Activated naive CD4-positive, alpha-beta T cell treated with anti-CD3 and anti-CD28 coated beads, Interleukin-2, amount 10 ng/mL, durations not matched to agents 7 days and 5 days (primary cell): ENCODE measurements at regions of chr1 and their contacts with region 1.

Region 1: GRCh38 chr1:88180449-88181108 is 503.5 kb upstream of the PKN2 start:
- DNase-seq: peak; percentile 73
- H3K4me3 Mint-ChIP-seq: no peak overlapping the region
- H3K27ac Mint-ChIP-seq: no peak overlapping the region
- H3K4me1 Mint-ChIP-seq: no peaks in the 10 kb centered on the region
- H3K27me3 Mint-ChIP-seq: no peaks in the 10 kb centered on the region

Region 2: DNA sequence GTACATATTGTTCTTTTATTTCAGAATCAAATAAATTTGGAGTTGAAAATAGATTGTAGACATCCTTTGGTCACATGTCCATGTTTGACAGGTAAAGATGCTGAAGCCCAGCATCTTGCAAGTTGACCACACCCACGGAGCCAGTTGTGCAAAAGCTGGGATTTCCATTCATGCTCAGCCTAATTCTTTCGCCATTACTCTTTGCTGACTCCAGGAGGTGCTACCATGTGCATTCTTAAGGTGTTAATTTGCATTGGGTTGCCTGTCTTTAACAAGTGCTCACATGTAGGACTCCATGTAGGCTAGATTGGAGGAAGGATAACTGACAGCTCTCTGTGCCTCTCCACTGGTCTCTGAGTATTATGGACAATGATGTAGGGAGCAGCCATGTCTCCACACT is 191.2 kb before region 1 on chr1:
- CTCF ChIA-PET with region 1: no interaction called
- DNase-seq: no peak
- H3K4me3 Mint-ChIP-seq: no peak overlapping the region
- H3K27ac Mint-ChIP-seq: no peak overlapping the region
- H3K4me1 Mint-ChIP-seq: no peaks in the 10 kb centered on the region
- H3K27me3 Mint-ChIP-seq: no peaks in the 10 kb centered on the region

Region 3: DNA sequence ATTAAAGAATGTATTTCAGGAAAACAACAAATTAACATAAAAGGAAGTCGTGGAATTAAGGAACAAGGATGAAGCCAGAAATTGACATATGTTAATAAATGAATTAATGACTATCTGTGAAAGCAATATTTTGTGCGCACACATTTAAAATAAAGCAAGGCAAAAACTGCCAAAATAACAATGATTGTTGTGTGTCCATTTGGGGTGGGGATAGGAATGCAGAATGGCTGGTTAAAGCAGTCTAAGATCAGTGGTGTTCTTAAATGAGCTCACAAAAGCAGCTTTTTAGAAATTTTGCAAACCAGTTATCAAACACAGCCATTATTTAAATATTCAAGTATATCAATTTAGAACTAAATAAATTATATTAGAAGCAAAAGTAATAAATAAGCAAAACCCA is 12.8 kb after region 1 on chr1:
- CTCF ChIA-PET with region 1: interaction called, 10 read pairs
- DNase-seq: no peak
- H3K4me3 Mint-ChIP-seq: no peak overlapping the region
- H3K27ac Mint-ChIP-seq: no peak overlapping the region
- H3K4me1 Mint-ChIP-seq: peaks cover 8% of the 10 kb centered on the region
- H3K27me3 Mint-ChIP-seq: peaks cover 4% of the 10 kb centered on the region

Region 4: DNA sequence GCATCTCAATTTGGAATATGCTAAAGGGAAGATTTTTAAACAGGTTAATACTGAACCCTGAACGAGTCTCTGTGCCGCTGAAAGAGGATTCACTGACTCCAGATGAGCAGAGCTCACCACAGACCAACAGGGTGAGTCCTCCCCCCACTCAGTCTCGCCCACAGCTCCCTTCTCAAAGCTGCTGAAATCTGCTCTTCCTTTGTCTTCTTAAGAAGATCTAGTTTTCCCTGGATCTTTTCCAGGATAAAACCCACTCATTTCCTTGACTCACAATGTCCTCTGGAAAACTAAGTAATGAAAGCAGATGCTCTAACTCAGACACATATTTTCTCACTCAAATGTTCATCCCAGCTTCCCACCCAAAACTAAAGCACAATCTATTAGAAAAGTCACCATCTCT is 56.5 kb after region 1 on chr1:
- CTCF ChIA-PET with region 1: no interaction called
- DNase-seq: no peak
- H3K4me3 Mint-ChIP-seq: no peak overlapping the region
- H3K27ac Mint-ChIP-seq: no peak overlapping the region
- H3K4me1 Mint-ChIP-seq: no peaks in the 10 kb centered on the region
- H3K27me3 Mint-ChIP-seq: no peaks in the 10 kb centered on the region

Region 5: DNA sequence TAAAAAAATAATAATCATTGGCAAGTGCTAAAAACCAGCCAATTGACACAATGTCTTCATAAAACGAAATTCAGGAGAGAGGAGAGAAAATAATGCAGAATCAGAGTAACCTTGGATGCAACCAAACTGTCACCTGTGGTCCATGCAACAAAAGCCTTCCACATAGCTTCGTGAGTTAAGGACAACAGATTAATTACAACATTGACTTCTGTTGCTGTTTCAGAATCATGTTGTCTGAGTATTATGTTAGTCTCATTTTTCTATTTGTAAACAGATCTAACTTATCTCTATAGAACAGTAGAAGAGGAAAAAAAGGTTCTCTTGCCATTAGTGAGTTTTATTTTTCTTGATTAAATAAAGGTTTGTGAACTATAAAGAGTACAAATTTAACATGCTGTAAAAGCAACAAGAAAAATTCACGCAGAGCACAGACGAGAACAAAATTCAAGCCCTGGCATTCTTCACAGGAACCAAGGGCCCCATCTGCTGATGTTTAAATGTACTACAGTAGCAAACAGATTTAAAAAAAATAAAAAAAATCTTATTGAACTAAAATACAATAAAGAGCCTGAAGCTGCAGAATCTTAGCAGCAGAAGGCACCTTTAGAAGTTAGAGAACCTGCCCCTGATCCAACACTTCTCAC is 122.4 kb after region 1 on chr1:
- CTCF ChIA-PET with region 1: interaction called, 10 read pairs
- DNase-seq: no peak
- H3K4me3 Mint-ChIP-seq: no peak overlapping the region
- H3K27ac Mint-ChIP-seq: no peak overlapping the region
- H3K4me1 Mint-ChIP-seq: no peaks in the 10 kb centered on the region
- H3K27me3 Mint-ChIP-seq: no peaks in the 10 kb centered on the region

Region 6: DNA sequence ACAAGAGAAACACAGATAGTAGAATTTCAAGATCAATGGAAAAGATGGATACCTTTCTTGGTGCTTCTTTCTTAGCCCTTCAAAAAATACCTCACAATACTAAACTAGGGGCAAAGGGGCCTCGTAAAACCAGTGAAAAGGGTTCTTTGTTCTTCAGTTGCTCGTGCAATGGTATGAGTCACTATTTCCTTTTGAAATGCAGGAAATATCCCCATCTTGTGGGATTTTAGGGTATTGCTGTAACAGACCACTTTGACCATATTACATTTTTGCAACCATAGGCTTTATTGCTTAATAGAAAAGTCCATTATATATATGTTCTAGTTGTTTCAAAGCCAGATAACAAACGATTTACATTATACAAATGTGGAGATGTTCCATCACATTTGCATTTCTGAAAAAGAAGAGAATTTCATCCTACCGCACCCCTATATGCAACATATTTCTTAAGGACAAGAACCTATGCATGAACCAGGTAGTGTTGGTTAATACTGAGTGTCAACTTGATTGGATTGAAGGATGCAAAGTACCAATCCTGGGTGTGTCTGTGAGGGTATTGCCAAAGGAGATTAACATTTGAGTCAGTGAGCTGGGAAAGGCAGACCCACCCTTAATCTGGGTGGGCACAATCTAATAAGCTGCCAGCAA is 414.9 kb after region 1 on chr1:
- CTCF ChIA-PET with region 1: interaction called, 10 read pairs
- DNase-seq: no peak
- H3K4me3 Mint-ChIP-seq: no peak overlapping the region
- H3K27ac Mint-ChIP-seq: no peak overlapping the region
- H3K4me1 Mint-ChIP-seq: no peaks in the 10 kb centered on the region
- H3K27me3 Mint-ChIP-seq: peaks cover 3% of the 10 kb centered on the region